ENCODE measurements at regions of chr6 and their contacts with region 1.

Region 1: GRCh38 chr6:168956884-168957730 is 296.5 kb downstream of the THBS2 start:
- DNase-seq: peak; percentile 54
- ATAC-seq: peak; percentile 99
- H3K4me3 ChIP-seq: no peak overlapping the region
- H3K27ac ChIP-seq: no peak overlapping the region
- H3K4me1 ChIP-seq: no peaks in the 10 kb centered on the region
- H3K27me3 ChIP-seq: no peaks in the 10 kb centered on the region
- CTCF ChIP-seq: peak; percentile 82 to 88 (median 86)
- POLR2A ChIP-seq: no peak
- RAD21 ChIP-seq: peak; percentile 97

Region 2: DNA sequence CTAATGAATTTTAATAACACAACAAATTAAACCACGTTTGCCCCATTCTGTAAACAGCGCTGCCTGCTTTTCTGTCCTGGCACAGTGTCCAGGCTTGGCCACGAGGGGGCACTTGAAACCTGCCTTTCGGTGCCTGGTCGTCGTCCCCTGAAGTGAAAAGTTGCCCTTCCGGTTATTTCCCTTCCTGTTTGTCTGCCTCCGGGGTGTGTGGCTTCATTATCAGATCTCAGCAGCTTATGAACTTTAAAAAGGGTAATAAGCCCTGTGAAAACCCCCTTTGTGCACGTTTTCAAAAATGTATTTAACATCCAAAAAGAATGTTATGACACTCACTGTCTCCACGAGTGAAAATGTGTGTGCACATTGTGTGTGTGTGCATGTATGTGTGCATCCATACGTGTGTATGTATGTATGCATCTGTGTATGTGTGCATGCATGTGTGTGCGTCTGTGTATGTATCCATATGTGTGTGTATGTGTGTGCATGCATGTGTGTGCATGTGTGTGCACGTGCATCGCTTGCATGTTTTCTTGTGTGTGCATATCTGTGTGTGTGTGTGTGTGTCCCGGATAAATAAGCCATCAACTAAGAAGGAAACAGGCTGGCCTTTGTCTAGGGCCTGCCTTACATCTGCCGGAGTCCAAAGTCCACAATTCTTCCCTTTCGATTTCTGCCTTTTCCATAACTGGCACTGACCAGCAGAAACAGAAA is 61.9 kb before region 1 on chr6:
- CTCF ChIA-PET with region 1: no interaction called
- POLR2A ChIA-PET with region 1: no interaction called
- RAD21 ChIA-PET with region 1: no interaction called
- intact Hi-C with region 1: loop called (anchors 2 kb)
- DNase-seq: peak; percentile 43
- ATAC-seq: peak; percentile 96
- H3K4me3 ChIP-seq: 0 out of 4 replicates have a peak overlapping the region, but pooled peaks have one; percentile 7 to 29
- H3K27ac ChIP-seq: no peak overlapping the region
- H3K4me1 ChIP-seq: peaks cover 0 to 12% of the 10 kb centered on the region in 2 experiments; a peak in 2 of 4 replicates
- H3K27me3 ChIP-seq: no peaks in the 10 kb centered on the region
- CTCF ChIP-seq: peak; percentile 89 to 93 (median 92)
- POLR2A ChIP-seq: no peak
- RAD21 ChIP-seq: peak; percentile 94

Region 3: DNA sequence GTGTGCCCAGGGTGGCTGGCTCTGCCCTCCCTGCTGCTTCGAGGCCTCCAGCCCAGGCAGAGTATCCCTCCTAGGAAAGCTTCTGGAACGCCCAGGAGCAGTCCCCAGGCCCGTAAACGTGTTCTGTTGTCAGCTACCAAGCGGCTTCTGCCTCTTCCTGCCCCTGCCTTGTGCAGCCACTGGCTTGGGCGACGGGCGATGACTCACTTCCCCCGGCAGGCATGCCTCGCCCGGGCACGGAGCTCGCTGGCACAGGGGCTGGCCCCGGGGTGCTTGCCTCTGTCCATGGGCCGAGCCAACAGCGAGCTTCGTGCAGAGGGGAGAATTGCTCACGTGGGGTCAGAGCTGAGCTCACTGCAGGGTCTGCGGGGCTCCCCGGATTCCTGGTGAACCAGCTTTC is 383.3 kb after region 1 on chr6:
- CTCF ChIA-PET with region 1: interaction called, 3 read pairs
- POLR2A ChIA-PET with region 1: no interaction called
- RAD21 ChIA-PET with region 1: no interaction called
- intact Hi-C with region 1: loop called (anchors 1 kb)
- DNase-seq: peak; percentile 18
- ATAC-seq: peak; percentile 99
- H3K4me3 ChIP-seq: peak overlapping the region; percentile 15 to 40; a peak in 2 of 4 replicates
- H3K27ac ChIP-seq: peak overlapping the region; percentile 35; the same call in 1 of the 2 replicates
- H3K4me1 ChIP-seq: peaks cover 10 to 16% of the 10 kb centered on the region in 2 experiments; a peak in 3 of 4 replicates
- H3K27me3 ChIP-seq: no peaks in the 10 kb centered on the region
- CTCF ChIP-seq: no peak
- POLR2A ChIP-seq: no peak
- RAD21 ChIP-seq: no peak

Region 4: GRCh38 chr6:169677096-169677495 is 720.0 kb after region 1 on chr6:
- CTCF ChIA-PET with region 1: no interaction called
- POLR2A ChIA-PET with region 1: no interaction called
- RAD21 ChIA-PET with region 1: no interaction called
- intact Hi-C with region 1: loop called (anchors 5 kb)
- DNase-seq: no peak
- ATAC-seq: no peak
- H3K4me3 ChIP-seq: no peak overlapping the region
- H3K27ac ChIP-seq: no peak overlapping the region
- H3K4me1 ChIP-seq: no peaks in the 10 kb centered on the region
- H3K27me3 ChIP-seq: no peaks in the 10 kb centered on the region
- CTCF ChIP-seq: no peak
- POLR2A ChIP-seq: no peak
- RAD21 ChIP-seq: no peak

Region 5: DNA sequence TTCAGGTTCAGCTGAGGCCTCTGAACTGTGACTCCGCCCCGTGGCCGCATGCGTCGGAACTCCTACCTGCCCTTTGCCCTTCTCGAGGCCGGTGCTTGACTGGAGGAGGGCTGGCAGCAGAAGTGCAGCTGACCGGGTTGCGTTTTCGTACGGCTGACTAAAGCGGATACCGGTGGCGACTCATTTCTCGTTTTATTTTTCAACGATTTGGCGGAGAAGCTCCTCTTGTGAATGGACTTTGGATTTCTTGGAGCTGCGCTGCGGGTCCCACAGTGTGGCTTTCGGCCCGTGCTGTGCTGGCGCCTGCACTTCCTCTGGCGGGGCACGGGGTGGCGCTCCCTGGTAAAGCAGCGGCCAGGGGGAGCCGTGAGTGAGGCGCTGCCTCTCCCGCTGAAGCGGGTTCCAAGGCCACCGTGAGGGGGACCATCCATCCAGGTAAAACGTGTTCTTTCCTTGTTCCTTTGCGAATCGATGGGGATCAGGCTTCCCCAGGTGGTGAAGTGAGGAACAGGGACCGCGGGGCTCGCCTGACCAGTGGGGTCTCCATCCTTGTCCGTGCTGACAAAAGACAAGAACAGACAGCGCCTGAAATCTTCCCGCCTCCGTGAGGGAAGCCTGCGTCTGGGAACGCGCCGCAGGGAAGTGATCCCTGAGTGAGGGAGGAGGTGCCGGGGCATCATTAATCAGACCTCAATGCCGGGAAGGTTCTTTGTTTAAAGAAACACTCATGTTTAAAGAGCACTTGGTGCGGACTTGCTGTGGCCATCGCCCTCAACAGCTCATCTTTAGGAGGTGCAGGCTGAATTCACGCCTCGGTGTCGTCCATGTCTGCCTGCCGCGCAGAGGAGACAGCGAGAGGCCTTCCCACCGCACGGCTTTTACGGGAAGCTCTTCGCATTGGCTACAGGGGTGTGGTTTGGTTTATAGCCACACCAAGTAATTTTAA is 833.1 kb after region 1 on chr6:
- CTCF ChIA-PET with region 1: interaction called, 4 read pairs
- POLR2A ChIA-PET with region 1: no interaction called
- RAD21 ChIA-PET with region 1: no interaction called
- intact Hi-C with region 1: loop called (anchors 1 kb)
- DNase-seq: peak; percentile 35
- ATAC-seq: peak; percentile 96
- H3K4me3 ChIP-seq: peak overlapping the region; percentile 41 to 58
- H3K27ac ChIP-seq: no peak overlapping the region
- H3K4me1 ChIP-seq: peaks cover 0 to 16% of the 10 kb centered on the region in 2 experiments; a peak in 3 of 4 replicates
- H3K27me3 ChIP-seq: no peaks in the 10 kb centered on the region; the same call in 1 of the 2 replicates
- CTCF ChIP-seq: peak; percentile 94 to 97 (median 96)
- POLR2A ChIP-seq: no peak
- RAD21 ChIP-seq: peak; percentile 97

Region 6: DNA sequence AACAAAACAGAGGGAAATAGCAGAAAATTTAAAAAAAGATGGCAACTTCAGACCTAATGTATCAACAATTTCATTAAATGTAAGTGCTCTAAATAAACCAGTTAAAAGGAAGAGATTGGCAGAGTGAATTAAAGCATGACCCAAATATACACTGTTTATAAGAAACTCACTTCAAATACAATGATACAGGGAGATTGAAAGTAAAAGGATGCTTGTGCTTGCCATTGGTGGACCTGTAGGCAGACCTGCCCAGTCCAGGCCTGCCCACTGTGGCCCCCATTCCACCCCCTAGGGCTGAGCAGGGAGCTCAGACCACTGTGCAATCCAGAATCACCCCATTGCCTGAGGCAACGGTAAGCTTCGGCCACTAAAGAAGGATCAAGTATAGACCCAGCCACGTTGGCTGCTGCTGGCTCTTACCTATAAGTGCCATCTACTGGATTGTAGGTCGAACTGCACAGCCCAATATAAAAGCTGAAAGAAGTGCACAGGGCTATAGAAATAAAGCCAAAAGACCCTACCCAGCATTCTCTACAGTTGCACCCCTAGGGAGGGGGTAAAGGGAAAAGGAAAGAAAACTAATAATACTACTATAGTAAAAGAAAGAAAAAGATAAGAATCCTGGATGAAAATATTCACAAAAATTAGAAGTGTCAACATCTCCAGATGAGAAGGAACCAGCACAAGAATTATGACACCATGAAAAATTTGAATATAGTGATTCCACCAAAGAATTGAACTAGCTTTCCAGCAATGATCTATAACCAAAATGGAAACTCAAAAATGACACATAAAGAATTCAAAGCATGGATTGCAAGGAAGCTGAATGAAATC is 1559.9 kb after region 1 on chr6:
- CTCF ChIA-PET with region 1: no interaction called
- POLR2A ChIA-PET with region 1: no interaction called
- RAD21 ChIA-PET with region 1: no interaction called
- intact Hi-C with region 1: loop called (anchors 5 kb)
- DNase-seq: peak; percentile 48
- ATAC-seq: peak; percentile 99
- H3K4me3 ChIP-seq: no peak overlapping the region
- H3K27ac ChIP-seq: no peak overlapping the region
- H3K4me1 ChIP-seq: no peaks in the 10 kb centered on the region
- H3K27me3 ChIP-seq: peaks cover 5% of the 10 kb centered on the region; the same call in 1 of the 2 replicates
- CTCF ChIP-seq: peak; percentile 72 to 81 (median 79)
- POLR2A ChIP-seq: no peak
- RAD21 ChIP-seq: peak; percentile 90